OCI-LY7 (cell line): ENCODE measurements at regions of chr16 and their contacts with region 1.

Region 1: DNA sequence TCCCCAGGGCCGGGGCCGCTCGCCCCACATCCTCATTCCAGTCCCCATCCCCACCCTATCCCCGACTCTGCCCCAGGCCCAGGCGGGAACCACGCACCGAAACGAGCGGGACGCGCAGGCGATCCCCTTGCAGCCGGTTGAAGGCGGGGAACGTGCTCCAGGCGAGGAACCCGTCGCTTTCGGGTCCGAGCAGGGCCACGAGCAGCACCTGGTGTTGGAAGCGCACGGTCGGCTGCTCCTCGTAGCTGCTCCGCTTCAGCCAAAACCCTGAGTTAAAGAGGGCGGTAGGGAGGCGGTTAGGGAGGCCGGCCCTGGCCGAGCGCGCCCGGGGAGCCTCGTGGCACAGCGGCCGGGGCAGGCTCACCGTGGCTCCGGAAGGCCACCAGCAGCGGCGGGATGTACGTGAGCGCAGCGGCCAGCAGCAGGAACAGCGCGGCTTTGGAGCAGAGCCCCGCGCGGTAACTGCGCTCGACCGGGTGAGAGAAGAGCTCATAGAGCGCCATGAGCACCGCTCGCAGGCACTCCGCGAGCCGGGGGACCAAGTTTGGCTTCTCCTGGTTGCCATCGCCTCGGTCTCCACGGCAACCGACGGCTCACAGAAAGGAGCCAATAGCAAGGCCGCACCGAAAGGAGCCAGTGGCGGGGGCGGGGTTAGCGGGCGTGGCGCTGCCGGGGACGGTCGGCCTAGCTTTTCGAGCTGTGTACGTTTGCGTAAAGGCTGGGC is at the start of gene TMEM231:
- DNase-seq: peak; percentile 95
- H3K4me3 ChIP-seq: peak within 1 kb of the TSS; percentile 85
- H3K27ac ChIP-seq: peak within 1 kb of the TSS; percentile 78
- H3K4me1 ChIP-seq: peaks cover 14% of the 10 kb centered on the region
- CTCF ChIP-seq: 0 out of 2 replicates have a peak, but pooled peaks have one; percentile 20
- total RNA-seq, gene TMEM231: 5.6 and 6.9 TPM in 2 replicates

Region 2: GRCh38 chr16:75599452-75600277 is 43.8 kb after region 1 on chr16:
- CTCF ChIA-PET with region 1: no interaction called
- POLR2A ChIA-PET with region 1: no interaction called
- intact Hi-C with region 1: no loop called
- DNase-seq: no peak
- H3K4me3 ChIP-seq: no peak overlapping the region
- H3K27ac ChIP-seq: no peak overlapping the region
- H3K4me1 ChIP-seq: peaks cover 9% of the 10 kb centered on the region
- CTCF ChIP-seq: no peak

Region 3: DNA sequence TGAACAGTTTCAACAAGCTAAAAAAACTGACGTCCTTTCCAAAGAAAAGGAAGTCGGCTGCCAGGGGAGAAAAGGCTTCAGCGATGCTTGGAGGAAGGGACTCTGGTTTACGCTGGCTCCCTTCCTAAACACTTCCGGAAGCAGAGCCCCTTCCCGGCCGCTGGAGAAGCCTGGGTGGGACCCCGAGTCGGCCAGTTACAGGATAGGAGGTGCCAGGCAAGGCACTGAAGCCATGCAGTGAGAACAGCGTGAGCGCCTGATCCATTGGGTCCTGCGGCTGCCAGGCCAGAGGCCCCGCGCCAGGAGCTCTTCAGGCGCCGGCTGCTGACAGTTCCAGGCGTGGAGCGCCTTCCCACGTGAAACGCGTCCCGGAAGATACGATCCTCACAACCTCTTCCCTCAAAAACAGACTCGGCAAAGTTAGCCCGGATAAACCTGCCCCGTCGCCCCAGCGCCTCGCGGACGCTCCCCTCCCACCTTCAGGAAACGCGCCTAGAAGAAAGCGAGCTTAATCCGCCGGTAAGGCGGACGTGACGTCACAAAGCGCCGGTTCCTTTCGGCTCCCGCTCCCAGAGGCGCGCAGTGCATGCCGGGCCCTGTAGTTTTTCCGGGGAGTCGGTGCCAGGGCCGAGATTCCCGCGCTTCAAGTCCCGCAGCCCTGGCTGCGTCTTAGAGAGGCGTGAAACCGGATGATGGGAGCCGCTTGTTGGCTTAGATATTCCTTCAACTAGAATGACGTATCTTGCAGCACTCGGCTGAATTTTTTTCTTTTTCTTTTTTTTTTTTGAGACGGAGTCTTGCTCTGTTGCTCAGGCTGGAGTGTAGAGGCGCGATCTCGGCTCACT is 67.1 kb after region 1 on chr16 and contains the start of gene ADAT1:
- CTCF ChIA-PET with region 1: interaction called, 3 read pairs
- POLR2A ChIA-PET with region 1: interaction called, 3 read pairs
- intact Hi-C with region 1: loop called (anchors 1 kb)
- DNase-seq: peak; percentile 98
- H3K4me3 ChIP-seq: peak within 1 kb of the TSS; percentile 82
- H3K27ac ChIP-seq: peak within 1 kb of the TSS; percentile 59
- H3K4me1 ChIP-seq: peaks cover 22% of the 10 kb centered on the region
- CTCF ChIP-seq: no peak
- total RNA-seq, gene ADAT1: 46.8 and 53.4 TPM in 2 replicates

Region 4: DNA sequence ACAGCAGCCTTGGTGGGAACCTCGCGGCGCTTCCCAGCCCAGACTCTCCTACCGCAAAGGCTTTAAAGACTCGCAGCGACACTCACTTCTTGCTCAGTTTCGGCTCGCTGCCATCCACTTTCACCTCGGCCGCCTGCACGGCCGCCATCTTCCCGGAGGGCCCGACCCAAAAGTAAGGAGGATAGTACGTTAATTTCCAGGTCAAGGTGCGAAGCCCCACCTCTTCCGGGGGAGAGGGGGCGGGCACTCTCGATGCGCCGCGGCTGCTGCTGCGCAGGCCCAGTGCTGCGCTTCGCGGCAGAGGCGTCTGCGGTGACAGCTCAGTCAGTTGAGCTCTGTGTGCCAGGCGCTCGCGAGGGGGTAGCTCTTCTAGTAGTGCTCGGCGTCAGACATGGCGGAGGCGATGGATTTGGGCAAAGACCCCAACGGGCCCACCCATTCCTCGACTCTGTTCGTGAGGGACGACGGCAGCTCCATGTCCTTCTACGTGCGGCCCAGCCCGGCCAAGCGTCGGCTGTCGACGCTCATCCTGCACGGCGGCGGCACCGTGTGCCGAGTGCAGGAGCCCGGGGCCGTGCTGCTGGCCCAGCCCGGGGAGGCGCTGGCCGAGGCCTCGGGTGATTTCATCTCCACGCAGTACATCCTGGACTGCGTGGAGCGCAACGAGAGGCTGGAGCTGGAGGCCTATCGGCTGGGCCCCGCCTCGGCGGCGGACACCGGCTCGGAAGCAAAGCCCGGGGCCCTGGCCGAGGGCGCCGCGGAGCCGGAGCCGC is 91.8 kb after region 1 on chr16 and contains the starts of genes KARS1 and TERF2IP:
- CTCF ChIA-PET with region 1: no interaction called
- POLR2A ChIA-PET with region 1: interaction called, 4 read pairs
- intact Hi-C with region 1: loop called (anchors 2 kb)
- DNase-seq: peak; percentile 93
- H3K4me3 ChIP-seq: peak within 1 kb of the TSS; percentile 88
- H3K27ac ChIP-seq: peak within 1 kb of the TSS; percentile 82
- H3K4me1 ChIP-seq: peaks cover 57% of the 10 kb centered on the region
- CTCF ChIP-seq: no peak
- total RNA-seq, gene KARS1: 126 and 143 TPM in 2 replicates
- total RNA-seq, gene TERF2IP: 41.6 and 42.3 TPM in 2 replicates